Caco-2 (cell line): ENCODE measurements at regions of chr5 and their contacts with region 1.

Region 1: DNA sequence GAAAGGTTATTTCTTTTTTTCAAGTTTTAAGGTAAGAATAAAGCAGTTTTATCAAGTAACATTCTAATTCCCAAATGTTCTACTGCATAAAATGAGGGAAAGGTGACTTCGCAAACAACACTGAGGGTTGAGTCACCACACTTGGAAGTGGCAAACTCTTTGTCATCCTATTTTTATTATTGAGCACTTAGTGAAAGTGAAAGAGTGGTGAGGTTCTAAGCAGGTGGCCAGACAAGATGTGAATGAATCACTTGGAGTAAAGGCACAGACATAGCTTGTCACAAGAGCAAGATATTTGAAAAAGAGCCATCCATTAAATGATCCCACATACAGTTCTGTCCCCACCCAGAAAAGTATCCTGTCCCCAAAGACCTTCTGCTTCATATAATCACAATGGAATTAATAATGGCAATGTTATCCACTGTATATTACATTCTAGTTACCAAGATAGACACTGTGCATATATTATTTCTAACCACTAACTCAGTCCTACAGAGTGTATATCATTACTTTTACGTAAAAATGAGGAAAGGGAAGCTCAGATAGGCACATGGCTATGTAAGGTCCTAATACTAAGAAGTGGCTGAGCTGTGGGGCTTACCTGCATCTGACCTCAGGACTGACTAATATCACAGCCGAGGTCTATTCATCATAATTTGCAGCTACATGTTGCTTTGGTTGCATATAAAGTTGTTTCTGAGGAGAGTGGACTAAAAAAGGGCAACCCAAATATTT is 730.4 kb upstream of the MEF2C start:
- DNase-seq: no peak
- H3K4me3 ChIP-seq: no peak overlapping the region
- H3K4me3 Mint-ChIP-seq: no peak overlapping the region
- H3K27ac Mint-ChIP-seq: no peak overlapping the region
- H3K4me1 ChIP-seq: no peaks in the 10 kb centered on the region
- H3K4me1 Mint-ChIP-seq: no peaks in the 10 kb centered on the region
- H3K27me3 ChIP-seq: no peaks in the 10 kb centered on the region
- H3K27me3 Mint-ChIP-seq: no peaks in the 10 kb centered on the region
- CTCF ChIP-seq: no peak

Region 2: DNA sequence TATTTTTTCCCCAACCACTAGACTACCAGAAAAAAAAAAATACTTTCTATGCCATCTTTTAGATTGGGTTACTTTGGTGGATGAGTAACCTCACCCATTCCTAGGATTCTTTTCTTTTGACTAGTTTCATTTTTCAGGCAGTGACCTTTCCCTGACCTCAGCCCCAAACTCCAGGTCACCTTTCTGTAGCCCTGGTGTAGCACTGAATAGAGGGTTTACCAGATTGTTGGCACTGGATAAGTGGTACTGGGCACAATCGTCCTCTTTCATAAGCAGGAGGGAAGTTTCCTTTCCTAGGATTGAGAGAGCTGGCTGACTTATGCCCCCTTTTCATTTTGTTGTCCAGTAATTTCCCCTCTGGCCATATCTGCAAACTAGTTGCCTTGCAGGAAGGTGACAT is 1175.4 kb before region 1 on chr5:
- CTCF ChIA-PET with region 1: no interaction called
- POLR2A ChIA-PET with region 1: no interaction called
- intact Hi-C with region 1: loop called (anchors 5 kb)
- DNase-seq: no peak
- H3K4me3 ChIP-seq: no peak overlapping the region
- H3K4me3 Mint-ChIP-seq: no peak overlapping the region
- H3K27ac Mint-ChIP-seq: no peak overlapping the region
- H3K4me1 ChIP-seq: no peaks in the 10 kb centered on the region
- H3K4me1 Mint-ChIP-seq: peaks cover 6% of the 10 kb centered on the region
- H3K27me3 ChIP-seq: no peaks in the 10 kb centered on the region
- H3K27me3 Mint-ChIP-seq: peaks cover 4% of the 10 kb centered on the region
- CTCF ChIP-seq: no peak

Region 3: DNA sequence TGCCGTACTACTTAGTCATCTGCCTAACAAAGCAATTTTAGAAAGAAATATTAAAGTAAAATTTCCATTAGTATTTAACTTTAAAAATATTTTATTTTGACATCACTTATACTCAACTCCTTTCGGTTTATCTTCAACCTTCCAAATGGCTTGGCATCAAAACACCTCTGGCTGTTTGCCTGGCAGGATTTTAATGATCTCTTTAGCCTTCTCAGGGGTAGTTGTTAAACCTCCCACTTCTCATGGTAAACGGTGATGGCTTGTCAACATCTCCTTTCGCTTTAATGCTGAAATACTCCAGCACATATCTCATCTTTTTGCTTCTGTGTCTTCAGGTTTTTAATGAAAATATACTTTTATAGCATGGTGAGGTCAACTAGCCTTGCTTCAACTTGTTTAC is 49.1 kb after region 1 on chr5:
- CTCF ChIA-PET with region 1: no interaction called
- POLR2A ChIA-PET with region 1: no interaction called
- intact Hi-C with region 1: no loop called
- DNase-seq: no peak
- H3K4me3 ChIP-seq: no peak overlapping the region
- H3K4me3 Mint-ChIP-seq: no peak overlapping the region
- H3K27ac Mint-ChIP-seq: no peak overlapping the region
- H3K4me1 ChIP-seq: no peaks in the 10 kb centered on the region
- H3K4me1 Mint-ChIP-seq: no peaks in the 10 kb centered on the region
- H3K27me3 ChIP-seq: no peaks in the 10 kb centered on the region
- H3K27me3 Mint-ChIP-seq: no peaks in the 10 kb centered on the region
- CTCF ChIP-seq: no peak